Activated CD4-positive, alpha-beta T cell treated with anti-CD3 and anti-CD28 coated beads for 36 hours (primary cell): ENCODE measurements at regions of chr3 and their contacts with region 1.

Region 1: GRCh38 chr3:38651154-38651789 is 1.8 kb upstream of the SCN5A start:
- DNase-seq: peak; percentile 83
- ATAC-seq: peak; percentile 60
- H3K4me3 Mint-ChIP-seq: no peak overlapping the region
- H3K27ac Mint-ChIP-seq: no peak overlapping the region
- H3K4me1 Mint-ChIP-seq: peaks cover 13% of the 10 kb centered on the region
- H3K27me3 Mint-ChIP-seq: peaks cover 5% of the 10 kb centered on the region

Region 2: DNA sequence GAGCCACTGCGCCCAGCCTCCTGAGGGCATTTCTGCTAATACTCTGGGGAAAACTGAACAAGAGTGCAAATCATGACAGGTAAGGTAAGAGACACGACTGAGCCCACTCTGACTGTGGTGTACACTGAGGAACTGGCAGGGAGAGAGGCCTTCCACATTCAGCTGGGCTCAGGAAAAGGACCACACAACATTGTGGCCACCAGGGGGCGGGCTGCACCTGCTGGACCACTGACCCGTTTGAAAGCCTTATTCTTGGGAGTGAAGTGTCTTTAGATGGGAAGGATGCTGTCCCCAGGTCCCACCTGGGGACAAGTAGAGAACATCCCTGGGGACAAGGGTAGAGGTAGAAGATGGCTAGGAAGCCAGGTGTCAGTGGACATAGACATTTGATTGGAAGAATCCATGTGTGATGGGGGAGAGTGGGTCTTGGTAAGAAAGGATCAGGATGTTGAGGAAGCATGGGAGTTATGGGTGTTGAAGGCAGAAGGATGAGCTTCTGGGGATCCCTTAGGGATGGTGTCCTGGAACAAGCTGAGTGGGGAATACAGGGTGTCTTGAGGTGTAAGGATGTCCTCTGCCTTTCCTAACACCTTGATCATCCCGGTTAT is 795.8 kb before region 1 on chr3:
- CTCF ChIA-PET with region 1: no interaction called
- POLR2A ChIA-PET with region 1: no interaction called
- intact Hi-C with region 1: loop called in 1 of 2 experiments (anchors 5 kb)
- DNase-seq: peak; percentile 89
- ATAC-seq: peak; percentile 65
- H3K4me3 Mint-ChIP-seq: no peak overlapping the region
- H3K27ac Mint-ChIP-seq: no peak overlapping the region
- H3K4me1 Mint-ChIP-seq: peaks cover 6% of the 10 kb centered on the region
- H3K27me3 Mint-ChIP-seq: no peaks in the 10 kb centered on the region

Region 3: DNA sequence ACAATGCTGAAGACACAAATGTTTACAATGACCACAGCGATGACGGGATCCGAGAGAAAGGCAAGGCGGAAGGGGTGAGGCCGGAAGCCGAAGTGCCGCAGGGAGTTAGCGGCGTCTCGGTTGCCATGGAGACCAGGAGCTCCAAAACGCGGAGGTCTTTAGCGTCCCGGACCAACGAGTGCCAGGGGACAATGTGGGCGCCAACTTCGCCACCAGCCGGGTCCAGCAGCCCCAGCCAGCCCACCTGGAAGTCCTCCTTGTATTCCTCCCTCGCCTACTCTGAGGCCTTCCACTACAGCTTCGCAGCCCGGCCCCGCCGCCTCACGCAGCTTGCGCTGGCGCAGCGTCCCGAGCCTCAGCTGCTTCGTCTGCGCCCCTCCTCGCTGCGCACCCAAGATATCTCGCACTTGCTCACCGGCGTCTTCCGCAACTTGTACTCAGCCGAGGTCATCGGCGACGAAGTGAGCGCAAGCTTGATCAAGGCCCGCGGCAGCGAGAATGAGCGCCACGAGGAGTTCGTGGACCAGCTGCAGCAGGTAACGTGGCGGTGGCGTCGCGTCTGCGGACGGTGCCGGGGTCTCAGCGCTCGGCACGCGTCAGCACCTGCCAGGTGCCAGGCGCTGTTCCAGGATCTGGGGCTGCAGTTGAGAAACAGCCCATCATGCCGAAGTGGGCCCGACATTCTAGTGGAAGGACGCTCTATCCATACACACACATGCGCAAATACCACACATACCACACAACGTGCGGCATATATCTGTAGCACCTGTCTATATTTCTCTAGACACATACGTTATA is 612.0 kb before region 1 on chr3 and contains the start of gene DLEC1:
- CTCF ChIA-PET with region 1: no interaction called
- POLR2A ChIA-PET with region 1: no interaction called
- intact Hi-C with region 1: loop called in 1 of 2 experiments (anchors 2 kb)
- DNase-seq: peak; percentile 91
- ATAC-seq: peak; percentile 70
- H3K4me3 Mint-ChIP-seq: peak within 1 kb of the TSS; percentile 29
- H3K27ac Mint-ChIP-seq: peak within 1 kb of the TSS; percentile 91
- H3K4me1 Mint-ChIP-seq: peaks cover 27% of the 10 kb centered on the region
- H3K27me3 Mint-ChIP-seq: peaks cover 2% of the 10 kb centered on the region
- total RNA-seq, gene DLEC1: 0.19 to 0.46 TPM

Region 4: GRCh38 chr3:38346587-38347410 is 304.5 kb before region 1 on chr3 and contains the start of gene XYLB:
- CTCF ChIA-PET with region 1: interaction called, 4 read pairs
- POLR2A ChIA-PET with region 1: no interaction called
- intact Hi-C with region 1: loop called in 1 of 2 experiments (anchors 2 kb)
- DNase-seq: peak; percentile 89
- ATAC-seq: peak; percentile 98
- H3K4me3 Mint-ChIP-seq: peak within 1 kb of the TSS; percentile 70
- H3K27ac Mint-ChIP-seq: no peak within 1 kb of the TSS
- H3K4me1 Mint-ChIP-seq: peaks cover 2% of the 10 kb centered on the region
- H3K27me3 Mint-ChIP-seq: peaks cover 2% of the 10 kb centered on the region
- total RNA-seq, gene XYLB: 5.0 to 5.3 TPM

Region 5: GRCh38 chr3:38496131-38496910 is 155.0 kb before region 1 on chr3 and contains the start of gene EXOG:
- CTCF ChIA-PET with region 1: interaction called, 8 read pairs
- POLR2A ChIA-PET with region 1: no interaction called
- intact Hi-C with region 1: loop called (anchors 1 to 2 kb)
- DNase-seq: peak; percentile 98
- ATAC-seq: peak; percentile 88
- H3K4me3 Mint-ChIP-seq: peak within 1 kb of the TSS; percentile 86
- H3K27ac Mint-ChIP-seq: peak within 1 kb of the TSS; percentile 92
- H3K4me1 Mint-ChIP-seq: peaks cover 18% of the 10 kb centered on the region
- H3K27me3 Mint-ChIP-seq: no peaks in the 10 kb centered on the region
- total RNA-seq, gene EXOG: 13.0 to 14.9 TPM

Region 6: DNA sequence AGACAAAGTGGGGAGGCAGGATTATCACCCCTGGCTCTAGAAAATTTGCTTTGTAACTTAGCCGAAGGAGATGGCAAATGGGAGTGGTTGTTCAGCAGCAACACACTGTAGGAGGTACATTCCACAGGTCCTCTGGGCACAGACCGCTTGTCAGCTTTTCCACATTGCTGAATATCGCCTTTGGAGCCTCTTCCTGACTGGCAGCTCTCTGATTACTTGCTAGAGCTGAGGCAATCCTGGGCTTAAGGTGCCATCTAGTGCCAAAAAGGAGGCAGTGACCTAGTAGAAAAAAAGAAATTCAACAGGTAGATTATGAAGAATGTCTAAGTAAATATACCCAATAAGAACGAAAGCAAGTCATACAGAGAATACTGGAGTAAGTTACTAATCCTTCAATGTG is 11.3 kb after region 1 on chr3:
- CTCF ChIA-PET with region 1: interaction called, 16 read pairs
- POLR2A ChIA-PET with region 1: no interaction called
- intact Hi-C with region 1: no loop called
- DNase-seq: no peak
- ATAC-seq: no peak
- H3K4me3 Mint-ChIP-seq: no peak overlapping the region
- H3K27ac Mint-ChIP-seq: no peak overlapping the region
- H3K4me1 Mint-ChIP-seq: no peaks in the 10 kb centered on the region
- H3K27me3 Mint-ChIP-seq: peaks cover 24% of the 10 kb centered on the region

Region 7: GRCh38 chr3:39051647-39052561 is 400.6 kb after region 1 on chr3 and contains the starts of genes SCN11A and WDR48:
- CTCF ChIA-PET with region 1: no interaction called
- POLR2A ChIA-PET with region 1: no interaction called
- intact Hi-C with region 1: loop called in 1 of 2 experiments (anchors 5 kb)
- DNase-seq: peak; percentile 96
- ATAC-seq: peak; percentile 97
- H3K4me3 Mint-ChIP-seq: peak within 1 kb of the TSS; percentile 87
- H3K27ac Mint-ChIP-seq: peak within 1 kb of the TSS; percentile 97
- H3K4me1 Mint-ChIP-seq: peaks cover 45% of the 10 kb centered on the region
- H3K27me3 Mint-ChIP-seq: no peaks in the 10 kb centered on the region
- total RNA-seq, gene SCN11A: 0.07 to 0.09 TPM
- total RNA-seq, gene WDR48: 33.3 to 36.5 TPM